Sigmoid colon (tissue), 7 donors: ENCODE measurements at regions of chr17 and their contacts with region 1.

Region 1: GRCh38 chr17:10761281-10761680 is 31.5 kb upstream of the TMEM220 start:
- DNase-seq: peak; percentile 55
- H3K4me3 ChIP-seq: no peak overlapping the region
- H3K27ac ChIP-seq: no peak overlapping the region
- H3K4me1 ChIP-seq: no peaks in the 10 kb centered on the region
- H3K27me3 ChIP-seq: no peaks in the 10 kb centered on the region
- CTCF ChIP-seq: no peak
- EP300 ChIP-seq: no peak
- POLR2A ChIP-seq: no peak

Region 2: GRCh38 chr17:10727192-10727976 is 33.9 kb before region 1 on chr17:
- intact Hi-C with region 1: no loop called
- DNase-seq: no peak
- H3K4me3 ChIP-seq: no peak overlapping the region
- H3K27ac ChIP-seq: no peak overlapping the region
- H3K4me1 ChIP-seq: peaks cover 2 to 17% (median 10%) of the 10 kb centered on the region in 4 donors
- H3K27me3 ChIP-seq: no peaks in the 10 kb centered on the region
- CTCF ChIP-seq: no peak
- EP300 ChIP-seq: no peak
- POLR2A ChIP-seq: no peak

Region 3: GRCh38 chr17:10815378-10815777 is 54.1 kb after region 1 on chr17:
- intact Hi-C with region 1: loop called (anchors 5 kb)
- DNase-seq: no peak
- H3K4me3 ChIP-seq: no peak overlapping the region
- H3K27ac ChIP-seq: no peak overlapping the region
- H3K4me1 ChIP-seq: no peaks in the 10 kb centered on the region
- H3K27me3 ChIP-seq: no peaks in the 10 kb centered on the region
- CTCF ChIP-seq: no peak
- EP300 ChIP-seq: no peak
- POLR2A ChIP-seq: no peak